ENCODE measurements at regions of chr16 and their contacts with region 1.

Region 1: GRCh38 chr16:76487411-76488064 is 210.3 kb downstream of the CNTNAP4 start:
- DNase-seq: no peak
- H3K4me3 ChIP-seq: no peak overlapping the region
- CTCF ChIP-seq: no peak

Region 2: GRCh38 chr16:76450890-76451289 is 36.6 kb before region 1 on chr16:
- in situ Hi-C with region 1: no loop called
- DNase-seq: no peak
- H3K4me3 ChIP-seq: no peak overlapping the region
- CTCF ChIP-seq: no peak

Region 3: DNA sequence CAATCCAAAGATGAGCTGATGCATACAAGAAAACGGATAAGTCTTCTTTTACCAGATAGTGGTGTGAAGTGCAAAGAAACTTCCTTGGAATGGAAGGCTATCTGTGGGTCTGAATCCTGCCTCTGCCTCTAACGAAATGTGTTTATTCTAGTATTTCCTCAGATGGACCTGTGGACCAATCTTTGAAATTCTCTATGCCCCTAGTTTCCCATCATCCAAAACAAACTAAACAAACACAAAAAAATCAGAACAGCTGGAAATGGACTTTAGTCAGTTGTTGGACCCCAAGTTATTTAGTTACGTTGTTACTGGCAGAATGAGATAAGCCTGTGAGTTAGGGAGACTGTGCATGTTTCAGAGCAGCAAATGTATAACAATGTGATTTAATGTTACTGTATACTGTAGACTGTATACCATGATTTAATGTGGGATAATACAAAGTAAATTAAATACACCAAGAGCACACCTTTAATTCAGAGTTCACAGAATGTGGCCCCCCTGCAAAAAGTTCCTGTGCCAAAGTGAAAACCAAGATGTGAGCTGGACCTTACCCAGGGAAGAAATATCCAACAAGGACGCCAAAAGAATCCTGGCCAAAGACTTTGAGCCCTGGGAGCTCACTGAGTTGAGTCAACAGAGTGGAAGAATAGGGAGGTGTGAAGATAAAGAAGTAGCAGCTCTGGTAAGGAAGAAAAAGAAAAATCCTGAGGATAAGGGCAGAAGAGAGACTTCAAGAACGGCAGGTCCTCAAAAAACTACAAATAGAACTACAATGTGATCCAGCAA is 44.8 kb after region 1 on chr16:
- in situ Hi-C with region 1: no loop called
- DNase-seq: no peak
- H3K4me3 ChIP-seq: no peak overlapping the region
- CTCF ChIP-seq: no peak

Region 4: GRCh38 chr16:76577003-76577402 is 89.5 kb after region 1 on chr16:
- in situ Hi-C with region 1: loop called (anchors 5 kb)
- DNase-seq: no peak
- H3K4me3 ChIP-seq: no peak overlapping the region
- CTCF ChIP-seq: no peak

Measured in astrocyte of the cerebellum (primary cell).